GM12878 (cell line): ENCODE measurements at regions of chr1 and their contacts with region 1.

Region 1: DNA sequence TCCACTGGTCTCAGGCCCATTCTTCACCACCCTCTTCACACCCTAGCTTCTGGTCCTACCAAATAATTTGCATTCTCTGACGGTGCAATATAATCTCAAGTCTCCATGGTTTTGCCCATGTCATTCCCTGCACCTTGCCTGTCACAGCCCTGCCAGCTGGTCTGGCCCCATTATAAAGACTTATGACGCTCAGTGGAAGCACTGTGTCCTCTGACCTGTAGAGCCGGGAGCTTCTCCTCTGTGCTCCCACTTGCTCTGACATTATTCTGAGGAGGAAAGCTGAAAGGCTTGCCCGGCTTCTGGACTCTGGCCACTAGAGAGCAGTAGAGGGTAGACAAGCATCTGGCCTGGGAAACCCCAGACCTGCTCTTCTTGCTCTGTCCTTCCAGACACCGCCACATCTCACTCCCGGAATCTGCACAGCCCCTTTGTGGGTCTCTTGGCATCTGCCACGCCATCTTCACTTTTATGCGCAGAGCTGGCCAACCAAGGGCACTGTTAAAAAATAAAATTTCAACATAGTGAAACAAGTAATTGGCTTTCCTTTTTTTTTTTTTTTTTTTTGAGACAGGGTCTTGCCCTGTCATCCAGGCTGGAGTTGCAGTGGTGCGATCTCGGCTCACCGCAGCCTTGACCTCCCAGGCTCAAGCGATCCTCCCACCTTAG is 44.4 kb downstream of the NENF start:
- DNase-seq: peak; percentile 65
- ATAC-seq: peak; percentile 97
- H3K4me3 ChIP-seq: no peak overlapping the region
- H3K27ac ChIP-seq: no peak overlapping the region; the same call in 1 of the 2 replicates
- H3K4me1 ChIP-seq: peaks cover 6% of the 10 kb centered on the region; the same call in 1 of the 2 replicates
- H3K27me3 ChIP-seq: no peaks in the 10 kb centered on the region
- CTCF ChIP-seq: peak; percentile 94 to 97 (median 96)
- EP300 ChIP-seq: no peak
- POLR2A ChIP-seq: no peak
- RAD21 ChIP-seq: peak; percentile 90

Region 2: DNA sequence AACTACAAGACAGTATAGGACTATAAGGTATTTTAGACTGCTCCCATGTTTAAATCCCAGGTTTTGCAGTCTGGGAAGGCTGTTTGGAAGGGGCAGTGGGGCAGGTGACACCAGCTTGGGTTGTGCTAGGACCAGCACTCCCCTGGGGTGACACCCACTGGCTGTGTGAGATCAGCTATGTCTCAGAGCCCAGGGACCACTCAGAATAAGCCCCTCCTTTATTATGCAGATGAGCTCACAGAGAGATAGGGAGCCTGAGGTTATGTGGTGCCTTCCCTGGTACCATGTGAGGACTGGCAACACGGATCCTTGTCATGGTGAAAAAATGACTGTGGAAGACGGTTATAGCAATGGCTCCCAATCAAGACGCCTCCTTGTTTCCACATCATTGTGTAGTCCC is 26.6 kb after region 1 on chr1:
- CTCF ChIA-PET with region 1: interaction called, 9 read pairs
- POLR2A ChIA-PET with region 1: no interaction called
- RAD21 ChIA-PET with region 1: interaction called, 4 read pairs
- SMC1A ChIA-PET with region 1: interaction called, 15 read pairs
- in situ Hi-C with region 1: no loop called
- intact Hi-C with region 1: no loop called
- DNase-seq: no peak
- ATAC-seq: peak; percentile 54
- H3K4me3 ChIP-seq: no peak overlapping the region
- H3K27ac ChIP-seq: no peak overlapping the region
- H3K4me1 ChIP-seq: peaks cover 5% of the 10 kb centered on the region
- H3K27me3 ChIP-seq: no peaks in the 10 kb centered on the region; a peak in 1 of 4 replicates
- CTCF ChIP-seq: no peak
- EP300 ChIP-seq: no peak
- POLR2A ChIP-seq: no peak
- RAD21 ChIP-seq: no peak

Region 3: DNA sequence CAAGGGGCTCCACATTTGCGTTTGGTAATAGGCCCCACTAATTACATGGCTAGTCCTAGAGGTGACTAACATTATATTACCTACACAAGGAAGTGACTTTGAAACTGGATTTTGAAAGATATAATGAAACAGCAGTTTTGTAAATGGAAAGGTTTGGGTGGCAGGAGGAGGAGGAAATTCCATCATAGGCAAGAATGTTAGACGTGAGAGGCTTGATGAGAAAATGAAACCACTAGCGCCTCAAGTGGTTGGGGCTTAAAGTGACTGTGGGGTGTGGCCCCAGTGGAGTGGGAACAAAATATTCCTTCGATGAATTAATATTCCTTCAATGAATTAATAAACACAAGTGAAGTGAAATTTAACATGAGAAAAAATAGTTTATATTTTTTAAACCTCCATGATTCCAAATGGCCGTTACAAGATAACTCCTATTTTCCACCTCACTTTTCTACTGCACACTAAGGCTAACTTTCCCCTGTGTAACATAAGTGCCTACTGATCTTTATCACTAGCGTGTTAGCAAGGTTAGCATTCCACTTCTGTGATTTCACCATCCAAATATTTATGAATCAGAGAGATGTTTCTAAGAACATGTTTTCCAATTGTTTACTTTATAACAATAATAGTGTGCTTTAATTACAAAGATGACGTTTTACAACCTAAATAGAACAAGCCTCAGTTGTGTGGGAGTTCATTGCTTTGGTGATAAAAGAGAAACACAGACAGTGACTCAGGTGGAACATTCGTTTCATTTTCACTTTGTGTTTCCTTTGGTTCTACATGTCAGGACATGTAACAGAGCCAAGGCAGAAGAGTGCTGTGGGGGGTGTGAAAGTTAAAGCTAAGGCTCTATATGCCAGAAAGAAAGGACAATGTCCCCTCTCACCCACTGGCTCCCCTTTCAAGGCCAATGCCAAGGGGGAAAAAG is 118.9 kb after region 1 on chr1:
- CTCF ChIA-PET with region 1: interaction called, 22 read pairs
- POLR2A ChIA-PET with region 1: interaction called, 6 read pairs
- RAD21 ChIA-PET with region 1: interaction called, 24 read pairs
- SMC1A ChIA-PET with region 1: interaction called, 16 read pairs
- in situ Hi-C with region 1: no loop called
- intact Hi-C with region 1: no loop called
- DNase-seq: peak; percentile 90
- ATAC-seq: peak; percentile 93
- H3K4me3 ChIP-seq: no peak overlapping the region
- H3K27ac ChIP-seq: peak overlapping the region; percentile 95
- H3K4me1 ChIP-seq: peaks cover 17% of the 10 kb centered on the region
- H3K27me3 ChIP-seq: no peaks in the 10 kb centered on the region
- CTCF ChIP-seq: peak; percentile 51 to 62 (median 61); a peak in 5 of 6 replicates
- EP300 ChIP-seq: peak; percentile 76 to 94
- POLR2A ChIP-seq: peak; percentile 39; the same call in 1 of the 2 replicates
- RAD21 ChIP-seq: peak; percentile 38

Region 4: GRCh38 chr1:212630158-212630900 is 153.2 kb after region 1 on chr1:
- CTCF ChIA-PET with region 1: interaction called, 58 read pairs
- POLR2A ChIA-PET with region 1: interaction called, 3 read pairs
- RAD21 ChIA-PET with region 1: interaction called, 14 read pairs
- SMC1A ChIA-PET with region 1: interaction called, 24 read pairs
- in situ Hi-C with region 1: no loop called
- intact Hi-C with region 1: loop called (anchors 1 kb)
- DNase-seq: no peak
- ATAC-seq: peak; percentile 99
- H3K4me3 ChIP-seq: no peak overlapping the region
- H3K27ac ChIP-seq: no peak overlapping the region
- H3K4me1 ChIP-seq: peaks cover 16% of the 10 kb centered on the region
- H3K27me3 ChIP-seq: no peaks in the 10 kb centered on the region
- CTCF ChIP-seq: peak; percentile 82 to 99 (median 97)
- EP300 ChIP-seq: no peak
- POLR2A ChIP-seq: no peak
- RAD21 ChIP-seq: peak; percentile 81

Region 5: GRCh38 chr1:212683357-212683722 is 206.2 kb after region 1 on chr1:
- CTCF ChIA-PET with region 1: interaction called, 7 read pairs
- POLR2A ChIA-PET with region 1: no interaction called
- RAD21 ChIA-PET with region 1: interaction called, 18 read pairs
- SMC1A ChIA-PET with region 1: interaction called, 6 read pairs
- in situ Hi-C with region 1: no loop called
- intact Hi-C with region 1: no loop called
- DNase-seq: peak; percentile 81
- ATAC-seq: peak; percentile 79
- H3K4me3 ChIP-seq: peak overlapping the region; percentile 33; the same call in 1 of the 2 replicates
- H3K27ac ChIP-seq: peak overlapping the region; percentile 90
- H3K4me1 ChIP-seq: peaks cover 62% of the 10 kb centered on the region
- H3K27me3 ChIP-seq: no peaks in the 10 kb centered on the region
- CTCF ChIP-seq: no peak
- EP300 ChIP-seq: peak in 1 of 2 experiments; percentile 52; a peak in 1 of 4 replicates
- POLR2A ChIP-seq: peak; percentile 80
- RAD21 ChIP-seq: no peak

Region 6: GRCh38 chr1:212760126-212760823 is 283.1 kb after region 1 on chr1:
- CTCF ChIA-PET with region 1: interaction called, 13 read pairs
- POLR2A ChIA-PET with region 1: no interaction called
- RAD21 ChIA-PET with region 1: interaction called, 3 read pairs
- SMC1A ChIA-PET with region 1: no interaction called
- in situ Hi-C with region 1: no loop called
- intact Hi-C with region 1: loop called (anchors 10 kb)
- DNase-seq: no peak
- ATAC-seq: peak; percentile 99
- H3K4me3 ChIP-seq: no peak overlapping the region
- H3K27ac ChIP-seq: no peak overlapping the region
- H3K4me1 ChIP-seq: no peaks in the 10 kb centered on the region
- H3K27me3 ChIP-seq: no peaks in the 10 kb centered on the region
- CTCF ChIP-seq: peak; percentile 55 to 67 (median 63); a peak in 5 of 6 replicates
- EP300 ChIP-seq: no peak
- POLR2A ChIP-seq: no peak
- RAD21 ChIP-seq: peak; percentile 69